PC-9 (cell line): ENCODE measurements at regions of chr10 and their contacts with region 1.

Region 1: DNA sequence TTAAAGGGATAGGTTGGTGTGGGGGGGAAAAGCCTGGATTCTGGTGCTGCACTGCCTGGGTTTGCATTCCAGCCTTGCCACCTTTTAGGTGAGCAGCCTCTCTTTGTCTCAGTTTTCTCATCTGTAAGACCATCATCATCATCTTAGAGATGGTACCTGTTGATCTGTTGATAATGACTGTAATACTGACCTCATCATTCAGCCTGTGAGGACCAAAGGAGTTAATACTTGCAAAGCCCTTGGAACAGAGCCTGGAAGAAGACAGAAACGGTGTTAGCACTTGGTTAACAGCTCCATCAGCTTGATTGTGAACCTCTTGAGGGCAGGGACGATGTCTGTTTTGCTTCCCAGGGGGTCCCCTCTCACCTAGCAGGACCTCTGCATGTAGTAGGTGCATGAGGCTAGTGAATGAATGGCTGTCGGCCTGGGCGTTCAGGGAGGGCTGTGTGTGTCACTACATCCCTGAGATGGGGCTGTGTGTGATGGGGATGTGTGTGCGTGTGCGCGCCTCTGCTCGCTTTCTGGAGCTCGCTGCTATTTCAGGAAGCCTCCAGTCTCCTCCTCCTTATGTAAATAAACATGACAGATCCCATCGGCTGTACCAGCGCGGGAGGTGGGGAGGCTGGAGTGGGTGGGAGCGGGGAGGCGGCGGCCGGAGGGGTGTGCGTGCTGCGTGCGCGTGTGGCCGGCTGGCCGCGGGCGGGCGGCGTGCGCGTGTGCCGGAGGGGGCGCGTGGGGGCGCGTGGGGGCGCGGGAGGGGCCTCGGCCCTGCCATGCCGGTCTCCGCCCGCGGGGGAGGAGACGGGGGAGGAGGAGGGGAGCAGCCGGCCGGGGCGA is 61.2 kb downstream of the NEURL1 start:
- DNase-seq: peak in 1 of 2 experiments; percentile 32
- H3K4me3 ChIP-seq: peak overlapping the region; percentile 49; the same call in 1 of the 2 replicates
- H3K27ac ChIP-seq: no peak overlapping the region
- H3K4me1 ChIP-seq: no peaks in the 10 kb centered on the region
- H3K27me3 ChIP-seq: no peaks in the 10 kb centered on the region
- CTCF ChIP-seq: no peak

Region 2: GRCh38 chr10:102743588-102744373 is 810.9 kb before region 1 on chr10 and contains the start of gene WBP1L:
- CTCF ChIA-PET with region 1: no interaction called
- POLR2A ChIA-PET with region 1: interaction called, 12 read pairs
- intact Hi-C with region 1: no loop called
- DNase-seq: peak; percentile 89 to 96
- H3K4me3 ChIP-seq: peak within 1 kb of the TSS; percentile 86
- H3K27ac ChIP-seq: no peak within 1 kb of the TSS
- H3K4me1 ChIP-seq: 0 out of 2 replicates have a peak, but pooled peaks cover 12% of the 10 kb centered on the region
- H3K27me3 ChIP-seq: no peaks in the 10 kb centered on the region
- CTCF ChIP-seq: no peak
- total RNA-seq, gene WBP1L: 16.2 and 19.7 TPM in 2 replicates

Region 3: GRCh38 chr10:103576862-103577261 is 22.2 kb after region 1 on chr10:
- CTCF ChIA-PET with region 1: no interaction called
- POLR2A ChIA-PET with region 1: no interaction called
- intact Hi-C with region 1: no loop called
- DNase-seq: no peak
- H3K4me3 ChIP-seq: no peak overlapping the region
- H3K27ac ChIP-seq: no peak overlapping the region
- H3K4me1 ChIP-seq: peaks cover 4% of the 10 kb centered on the region; the same call in 1 of the 2 replicates
- H3K27me3 ChIP-seq: no peaks in the 10 kb centered on the region
- CTCF ChIP-seq: no peak

Region 4: GRCh38 chr10:103668351-103669242 is 113.9 kb after region 1 on chr10:
- CTCF ChIA-PET with region 1: no interaction called
- POLR2A ChIA-PET with region 1: no interaction called
- intact Hi-C with region 1: no loop called
- DNase-seq: no peak
- H3K4me3 ChIP-seq: no peak overlapping the region
- H3K27ac ChIP-seq: no peak overlapping the region
- H3K4me1 ChIP-seq: no peaks in the 10 kb centered on the region
- H3K27me3 ChIP-seq: no peaks in the 10 kb centered on the region
- CTCF ChIP-seq: no peak